ENCODE measurements at regions of chr10 and their contacts with region 1.

Region 1: GRCh38 chr10:91607646-91608403 is 25.0 kb downstream of the PPP1R3C start:
- DNase-seq: no peak

Region 2: GRCh38 chr10:91590142-91590903 is 17.5 kb before region 1 on chr10:
- intact Hi-C with region 1: loop called (anchors 1 kb)
- DNase-seq: no peak

Measured in cardiac septum (tissue), 1 donor.